ENCODE measurements at regions of chr11 and their contacts with region 1.

Region 1: GRCh38 chr11:95067039-95067840 is 521 bp downstream of the SRSF8 start:
- DNase-seq: peak; percentile 57
- ATAC-seq: peak; percentile 91
- H3K4me3 ChIP-seq: peak overlapping the region; percentile 80 to 97 (median 93)
- H3K27ac ChIP-seq: peak overlapping the region; percentile 93
- H3K4me1 ChIP-seq: peaks cover 18% of the 10 kb centered on the region
- H3K27me3 ChIP-seq: no peaks in the 10 kb centered on the region; a peak in 1 of 5 replicates
- CTCF ChIP-seq: peak; percentile 66
- EP300 ChIP-seq: no peak
- POLR2A ChIP-seq: peak; percentile 60 to 66
- RAD21 ChIP-seq: peak; percentile 24; the same call in 1 of the 2 replicates

Region 2: GRCh38 chr11:94511932-94512781 is 555.1 kb before region 1 on chr11 and contains the start of gene C11orf97:
- CTCF ChIA-PET with region 1: no interaction called
- POLR2A ChIA-PET with region 1: no interaction called
- in situ Hi-C with region 1: no loop called
- intact Hi-C with region 1: loop called (anchors 10 kb)
- DNase-seq: peak; percentile 35
- ATAC-seq: peak; percentile 89
- H3K4me3 ChIP-seq: peak within 1 kb of the TSS; percentile 49 to 82 (median 71)
- H3K27ac ChIP-seq: peak within 1 kb of the TSS; percentile 23
- H3K4me1 ChIP-seq: peaks cover 45% of the 10 kb centered on the region
- H3K27me3 ChIP-seq: peaks cover 0 to 1% of the 10 kb centered on the region in 2 experiments; a peak in 1 of 5 replicates
- CTCF ChIP-seq: peak; percentile 10; the same call in 1 of the 2 replicates
- EP300 ChIP-seq: no peak
- POLR2A ChIP-seq: no peak
- RAD21 ChIP-seq: no peak
- total RNA-seq, gene C11orf97: 0.35 TPM in 1 of 2 replicates, not detected in the other

Region 3: DNA sequence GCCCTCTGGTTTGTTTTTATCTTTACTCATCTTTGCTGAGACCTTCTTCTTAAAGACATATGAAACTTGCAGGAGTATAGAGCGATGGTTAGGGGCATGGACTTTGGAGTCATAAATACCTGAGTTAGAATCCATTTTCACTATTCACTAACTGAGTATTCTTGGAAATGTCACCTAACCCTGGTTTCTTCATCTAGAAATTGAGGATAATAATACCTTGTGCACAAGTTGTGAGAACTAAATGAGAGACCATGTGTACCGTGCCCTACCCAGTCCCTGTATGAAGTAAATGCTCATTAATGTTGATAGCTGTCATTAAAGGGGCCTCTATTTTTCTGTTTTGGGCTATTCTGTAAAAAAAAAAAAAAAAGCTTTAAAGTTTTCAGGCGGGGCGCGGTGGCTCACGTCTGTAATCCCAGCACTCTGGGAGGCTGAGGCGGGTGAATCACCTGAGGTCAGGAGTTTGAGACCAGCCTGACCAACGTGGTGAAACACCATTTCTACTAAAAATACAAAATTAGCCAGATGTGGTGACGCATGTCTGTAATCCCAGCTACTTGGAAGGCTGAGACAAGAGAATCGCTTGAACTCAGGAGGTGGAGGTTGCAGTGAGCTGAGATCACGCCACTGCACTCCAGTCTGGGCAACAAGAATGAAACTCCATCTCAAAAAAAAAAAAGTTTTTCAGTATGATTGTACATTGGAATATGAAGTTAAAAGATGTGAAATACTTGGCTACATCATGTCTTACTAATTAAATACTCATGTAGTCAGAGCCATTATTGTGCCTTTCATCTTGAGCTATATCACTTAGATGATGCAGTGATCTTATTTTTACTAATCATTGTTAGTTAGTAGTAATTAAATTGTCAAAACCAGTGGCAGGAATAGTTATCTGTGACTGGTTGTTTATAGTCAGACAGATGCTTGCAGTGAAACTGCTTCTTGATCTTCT is 204.0 kb before region 1 on chr11:
- CTCF ChIA-PET with region 1: no interaction called
- POLR2A ChIA-PET with region 1: no interaction called
- in situ Hi-C with region 1: no loop called
- intact Hi-C with region 1: no loop called
- DNase-seq: no peak
- ATAC-seq: no peak
- H3K4me3 ChIP-seq: no peak overlapping the region
- H3K27ac ChIP-seq: no peak overlapping the region
- H3K4me1 ChIP-seq: no peaks in the 10 kb centered on the region
- H3K27me3 ChIP-seq: no peaks in the 10 kb centered on the region; a peak in 1 of 5 replicates
- CTCF ChIP-seq: no peak
- EP300 ChIP-seq: no peak
- POLR2A ChIP-seq: no peak
- RAD21 ChIP-seq: no peak

Region 4: DNA sequence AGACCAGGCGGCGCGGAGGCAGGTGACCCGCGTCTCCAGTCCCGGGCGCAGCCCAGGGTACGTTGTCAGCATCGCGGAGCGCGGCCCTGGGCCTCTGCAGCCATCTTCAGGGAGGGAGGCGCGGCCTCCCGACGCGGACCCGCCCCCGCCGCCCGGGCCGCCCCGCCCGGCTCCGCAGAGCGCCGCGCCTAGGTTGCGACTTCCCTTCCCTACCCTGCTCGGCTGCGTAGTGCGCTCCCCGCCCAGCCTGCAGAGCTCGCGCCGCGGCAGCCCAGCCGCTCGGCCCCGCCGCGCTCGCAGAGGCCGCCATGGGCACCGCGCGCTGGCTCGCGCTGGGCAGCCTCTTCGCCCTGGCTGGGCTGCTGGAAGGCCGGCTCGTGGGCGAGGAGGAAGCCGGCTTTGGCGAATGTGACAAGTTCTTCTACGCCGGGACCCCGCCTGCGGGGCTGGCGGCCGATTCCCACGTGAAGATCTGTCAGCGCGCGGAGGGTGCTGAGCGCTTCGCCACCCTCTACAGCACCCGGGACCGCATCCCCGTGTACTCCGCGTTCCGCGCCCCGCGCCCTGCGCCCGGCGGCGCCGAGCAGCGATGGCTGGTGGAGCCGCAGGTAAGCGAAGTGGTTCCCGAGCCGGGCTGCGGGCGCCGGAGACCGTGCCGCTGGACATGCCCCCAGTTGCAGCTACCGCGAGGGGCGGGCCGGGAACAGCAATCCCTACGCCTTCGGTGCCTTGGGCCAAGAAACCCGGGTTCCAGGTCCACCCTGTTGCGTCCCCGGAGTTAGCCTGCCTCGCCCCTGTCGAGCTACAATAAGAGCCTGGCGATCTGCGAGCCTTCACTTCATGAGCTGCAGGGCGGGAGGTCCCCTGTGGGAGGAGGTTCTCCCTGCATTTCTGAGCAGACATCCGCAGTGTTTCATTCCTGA is 22.6 kb after region 1 on chr11 and contains the start of gene ENDOD1:
- CTCF ChIA-PET with region 1: no interaction called
- POLR2A ChIA-PET with region 1: interaction called, 48 read pairs
- in situ Hi-C with region 1: no loop called
- intact Hi-C with region 1: loop called (anchors 1 kb)
- DNase-seq: peak; percentile 57
- ATAC-seq: peak; percentile 95
- H3K4me3 ChIP-seq: peak within 1 kb of the TSS; percentile 84 to 86 (median 85)
- H3K27ac ChIP-seq: no peak within 1 kb of the TSS
- H3K4me1 ChIP-seq: peaks cover 44% of the 10 kb centered on the region
- H3K27me3 ChIP-seq: 0 out of 5 replicates have a peak, but pooled peaks cover 1 to 2% of the 10 kb centered on the region in 2 experiments
- CTCF ChIP-seq: 0 out of 2 replicates have a peak, but pooled peaks have one; percentile 7
- EP300 ChIP-seq: no peak
- POLR2A ChIP-seq: no peak; a peak in 1 of 4 replicates
- RAD21 ChIP-seq: no peak
- total RNA-seq, gene ENDOD1: 4.3 and 6.8 TPM in 2 replicates

Region 5: DNA sequence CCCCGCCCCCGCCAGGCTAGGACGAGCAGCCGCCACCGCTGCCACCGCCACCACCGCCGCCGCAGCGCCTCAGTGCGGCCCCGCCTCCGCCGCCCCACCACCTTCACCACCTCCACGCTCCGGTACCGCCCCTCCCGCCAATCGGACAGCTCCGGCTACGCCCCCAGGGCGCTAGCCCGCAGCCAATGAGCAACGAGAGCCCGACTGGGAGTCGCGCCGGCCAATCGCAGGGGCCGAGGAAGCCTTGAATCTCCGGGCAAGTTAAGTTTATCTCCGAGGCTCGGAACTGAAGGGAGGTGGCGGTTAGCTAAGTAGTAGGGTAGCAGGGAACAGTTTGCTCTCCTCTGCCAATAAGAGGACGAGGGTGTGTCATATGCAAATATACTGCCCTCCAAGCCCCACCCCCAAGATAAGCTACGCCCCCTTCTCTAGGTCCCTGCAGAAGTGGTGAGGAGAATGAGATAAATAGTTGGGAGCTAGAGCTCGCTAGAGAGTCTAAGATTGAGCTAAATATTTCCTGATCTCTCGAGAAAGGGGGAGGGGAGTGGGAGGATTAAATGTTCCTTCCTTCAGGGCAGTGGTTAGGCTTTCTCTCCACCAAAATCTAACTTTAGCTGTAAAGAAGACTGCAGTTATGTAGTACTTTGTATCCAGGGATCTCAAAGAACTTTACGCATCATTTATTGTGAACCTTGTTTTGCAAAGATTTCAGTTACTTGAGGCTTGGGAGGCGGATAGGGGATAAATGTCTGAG is 164.1 kb after region 1 on chr11 and contains the start of gene SESN3:
- CTCF ChIA-PET with region 1: no interaction called
- POLR2A ChIA-PET with region 1: interaction called, 4 read pairs
- in situ Hi-C with region 1: no loop called
- intact Hi-C with region 1: loop called (anchors 2 kb)
- DNase-seq: peak; percentile 89
- ATAC-seq: peak; percentile 97
- H3K4me3 ChIP-seq: peak within 1 kb of the TSS; percentile 47 to 73 (median 62)
- H3K27ac ChIP-seq: no peak within 1 kb of the TSS
- H3K4me1 ChIP-seq: peaks cover 29% of the 10 kb centered on the region
- H3K27me3 ChIP-seq: peaks cover 0 to 36% of the 10 kb centered on the region in 2 experiments; a peak in 3 of 5 replicates
- CTCF ChIP-seq: 0 out of 2 replicates have a peak, but pooled peaks have one; percentile 8
- EP300 ChIP-seq: peak in 1 of 2 experiments; percentile 9; a peak in 1 of 4 replicates
- POLR2A ChIP-seq: no peak
- RAD21 ChIP-seq: no peak
- total RNA-seq, gene SESN3: 0.86 and 1.9 TPM in 2 replicates

Region 6: DNA sequence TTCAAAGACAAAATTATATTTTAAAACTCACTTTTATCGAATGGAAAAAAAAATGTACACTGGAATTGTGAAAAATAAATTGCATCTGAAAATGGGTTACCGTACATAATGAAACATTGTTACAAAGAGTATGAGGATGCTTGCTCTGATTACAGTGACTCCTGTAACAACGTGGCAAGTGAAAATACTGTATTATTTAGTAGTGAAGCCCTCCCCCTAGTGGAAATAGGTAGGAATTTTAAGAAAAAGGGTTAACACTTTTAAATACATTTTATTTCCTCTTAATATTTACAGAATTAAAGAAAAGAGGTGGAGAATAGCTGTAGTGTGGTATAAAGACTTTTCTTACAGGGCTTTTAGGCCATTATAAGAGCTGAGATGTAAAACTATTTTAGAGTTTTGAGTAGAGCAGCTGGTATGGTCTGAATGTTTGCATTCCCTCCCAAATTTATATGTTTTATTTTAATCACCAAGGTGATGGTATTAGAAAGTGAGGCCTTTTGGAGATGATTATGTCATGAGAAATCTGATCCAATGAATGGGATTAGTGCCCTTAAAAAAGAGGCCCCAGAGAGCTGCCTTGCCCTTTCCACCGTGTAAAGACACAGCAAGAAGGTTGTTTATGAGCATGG is 697.1 kb after region 1 on chr11:
- CTCF ChIA-PET with region 1: no interaction called
- POLR2A ChIA-PET with region 1: no interaction called
- in situ Hi-C with region 1: no loop called
- intact Hi-C with region 1: loop called (anchors 1 kb)
- DNase-seq: peak; percentile 47
- ATAC-seq: peak; percentile 71
- H3K4me3 ChIP-seq: no peak overlapping the region
- H3K27ac ChIP-seq: no peak overlapping the region
- H3K4me1 ChIP-seq: no peaks in the 10 kb centered on the region
- H3K27me3 ChIP-seq: peaks cover 0 to 4% of the 10 kb centered on the region in 2 experiments; a peak in 2 of 5 replicates
- CTCF ChIP-seq: peak; percentile 54
- EP300 ChIP-seq: no peak
- POLR2A ChIP-seq: no peak
- RAD21 ChIP-seq: no peak